ENCODE measurements at regions of chr17 and their contacts with region 1.

Region 1: DNA sequence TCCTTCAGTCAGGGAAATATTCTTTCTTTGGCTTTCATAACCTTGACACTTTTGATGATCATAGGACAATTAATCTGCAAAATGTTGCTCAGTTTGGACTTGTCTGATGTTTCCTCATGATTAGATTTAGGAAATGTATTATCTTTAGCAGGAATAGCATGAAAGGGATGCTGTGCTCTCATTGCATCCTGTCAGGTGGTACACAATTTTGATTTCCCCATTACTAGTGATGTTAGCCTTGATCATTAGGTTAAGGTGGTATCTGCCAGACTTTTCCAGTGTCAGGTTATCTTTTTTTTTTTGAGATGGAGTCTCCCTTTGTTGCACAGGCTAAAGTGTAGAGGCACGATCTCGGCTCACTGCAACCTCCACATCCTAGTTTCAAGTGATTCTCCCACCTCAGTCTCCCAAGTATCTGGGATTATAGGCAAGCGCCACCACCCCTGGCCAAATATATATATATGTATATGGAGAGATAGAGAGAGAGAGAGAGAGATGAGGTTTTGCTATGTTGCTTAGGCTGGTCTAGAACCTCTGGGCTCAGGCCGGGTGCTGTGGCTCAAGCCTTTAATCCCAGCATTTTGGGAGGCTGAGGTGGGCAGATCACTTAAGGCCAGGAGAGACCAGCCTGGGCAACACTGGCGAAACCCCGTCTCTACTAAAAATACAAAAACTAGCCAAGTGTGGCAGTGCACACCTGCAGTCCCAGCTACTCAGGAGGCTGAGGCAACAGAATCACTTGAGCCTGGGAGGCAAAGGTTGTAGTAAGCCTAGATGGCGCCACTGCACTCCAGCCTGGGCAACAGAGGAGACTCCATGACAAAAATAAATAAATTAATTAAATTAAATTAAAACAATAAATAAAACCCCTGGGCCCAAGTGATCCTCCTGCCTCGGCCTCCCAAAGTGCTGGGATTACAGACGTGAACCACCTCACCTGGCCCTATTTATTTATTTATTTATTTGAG is 15.8 kb upstream of the CAVIN1 start:
- DNase-seq: no peak
- ATAC-seq: peak; percentile 67
- H3K4me3 Mint-ChIP-seq: no peak overlapping the region
- H3K27ac Mint-ChIP-seq: no peak overlapping the region
- H3K4me1 Mint-ChIP-seq: peaks cover 17% of the 10 kb centered on the region
- H3K27me3 Mint-ChIP-seq: no peaks in the 10 kb centered on the region
- CTCF ChIP-seq: no peak

Region 2: GRCh38 chr17:42459256-42459800 is 20.4 kb after region 1 on chr17:
- CTCF ChIA-PET with region 1: interaction called, 3 read pairs
- POLR2A ChIA-PET with region 1: interaction called, 5 read pairs
- intact Hi-C with region 1: loop called (anchors 2 kb)
- DNase-seq: no peak
- ATAC-seq: no peak
- H3K4me3 Mint-ChIP-seq: peak overlapping the region; percentile 98
- H3K27ac Mint-ChIP-seq: peak overlapping the region; percentile 95
- H3K4me1 Mint-ChIP-seq: peaks cover 66% of the 10 kb centered on the region
- H3K27me3 Mint-ChIP-seq: no peaks in the 10 kb centered on the region
- CTCF ChIP-seq: no peak

Region 3: GRCh38 chr17:42472709-42473521 is 34.0 kb after region 1 on chr17:
- CTCF ChIA-PET with region 1: interaction called, 4 read pairs
- POLR2A ChIA-PET with region 1: interaction called, 3 read pairs
- intact Hi-C with region 1: loop called (anchors 5 kb)
- DNase-seq: no peak
- ATAC-seq: no peak
- H3K4me3 Mint-ChIP-seq: no peak overlapping the region
- H3K27ac Mint-ChIP-seq: no peak overlapping the region
- H3K4me1 Mint-ChIP-seq: peaks cover 19% of the 10 kb centered on the region
- H3K27me3 Mint-ChIP-seq: no peaks in the 10 kb centered on the region
- CTCF ChIP-seq: no peak